ENCODE measurements at regions of chr1 and their contacts with region 1.

Region 1: GRCh38 chr1:92749024-92749634 is 35.8 kb downstream of the EVI5 start:
- DNase-seq: peak; percentile 70

Region 2: DNA sequence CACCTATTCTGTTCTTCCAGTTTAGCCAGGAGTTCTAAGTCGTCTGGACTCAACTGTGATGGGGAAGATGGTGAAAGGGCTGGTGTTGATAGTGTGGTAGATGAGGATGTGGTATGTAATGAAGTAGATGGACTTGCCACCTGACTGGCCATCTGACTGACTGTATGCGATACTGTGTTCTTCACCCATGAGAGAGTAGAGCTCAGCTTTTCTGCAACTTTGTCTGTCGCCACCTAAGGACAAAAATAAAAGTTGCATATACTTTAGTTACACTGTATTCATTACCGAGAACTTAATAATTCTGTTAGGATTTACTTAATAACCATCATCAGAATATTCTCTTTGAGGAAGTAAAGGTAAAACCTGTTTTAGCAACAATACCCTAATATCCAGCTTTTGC is 12.7 kb before region 1 on chr1:
- CTCF ChIA-PET with region 1: interaction called, 14 read pairs
- POLR2A ChIA-PET with region 1: no interaction called
- DNase-seq: peak; percentile 41

Region 3: DNA sequence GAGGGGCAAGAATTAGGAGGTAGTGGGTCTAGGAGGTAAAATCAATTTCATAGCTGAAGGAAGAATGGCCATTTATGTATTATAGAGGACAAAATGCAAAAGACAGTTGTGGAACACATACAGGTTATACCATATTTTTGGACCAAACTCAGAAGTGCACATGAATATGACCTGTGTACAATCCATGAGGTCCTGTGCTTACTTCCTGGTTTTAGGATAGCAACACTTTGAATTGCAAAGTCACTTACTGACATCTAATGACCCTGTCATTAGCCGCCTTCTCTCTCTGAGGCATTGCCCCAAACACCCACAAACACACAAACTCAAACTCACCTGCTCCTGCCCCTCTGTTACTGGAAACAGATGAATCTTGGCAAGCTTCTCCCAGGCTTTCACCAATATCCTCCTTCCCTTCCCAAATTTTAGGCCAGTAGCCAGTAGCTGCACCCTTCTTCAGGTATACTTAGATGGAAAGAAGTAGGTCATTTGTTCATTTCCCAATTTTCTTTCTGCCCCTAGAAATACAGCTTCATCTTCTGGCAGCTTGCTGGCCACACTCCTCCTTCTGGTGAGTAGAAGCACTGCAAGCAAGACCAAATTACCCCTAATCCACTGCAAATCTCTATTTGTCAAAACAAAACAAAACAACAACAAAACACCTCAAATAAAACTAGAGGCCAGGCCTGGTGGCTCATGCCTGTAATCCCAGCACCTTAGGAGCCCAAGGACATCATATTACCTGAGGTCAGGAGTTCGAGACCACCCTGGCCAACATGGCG is 69.0 kb after region 1 on chr1:
- CTCF ChIA-PET with region 1: interaction called, 25 read pairs
- POLR2A ChIA-PET with region 1: no interaction called
- DNase-seq: peak; percentile 61

Measured in HEK293T (cell line).